ENCODE measurements at regions of chr6 and their contacts with region 1.

Region 1: GRCh38 chr6:85482905-85483700 is 33.2 kb downstream of the NT5E start:
- DNase-seq: peak; percentile 64
- H3K4me3 ChIP-seq: no peak overlapping the region; a peak in 1 of 4 replicates
- H3K27ac ChIP-seq: peak overlapping the region; percentile 67 to 92
- H3K4me1 ChIP-seq: peaks cover 6 to 15% of the 10 kb centered on the region in 2 experiments; a peak in 3 of 4 replicates
- H3K27me3 ChIP-seq: no peaks in the 10 kb centered on the region
- CTCF ChIP-seq: peak; percentile 99
- EP300 ChIP-seq: no peak
- RAD21 ChIP-seq: peak; percentile 79

Region 2: GRCh38 chr6:85344996-85345395 is 138.1 kb before region 1 on chr6:
- CTCF ChIA-PET with region 1: interaction called, 12 read pairs
- POLR2A ChIA-PET with region 1: no interaction called
- DNase-seq: no peak
- H3K4me3 ChIP-seq: no peak overlapping the region
- H3K27ac ChIP-seq: no peak overlapping the region
- H3K4me1 ChIP-seq: no peaks in the 10 kb centered on the region
- H3K27me3 ChIP-seq: no peaks in the 10 kb centered on the region; the same call in 1 of the 2 replicates
- CTCF ChIP-seq: no peak
- EP300 ChIP-seq: no peak
- RAD21 ChIP-seq: no peak

Region 3: GRCh38 chr6:85360794-85361642 is 122.1 kb before region 1 on chr6:
- CTCF ChIA-PET with region 1: interaction called, 62 read pairs
- POLR2A ChIA-PET with region 1: no interaction called
- DNase-seq: no peak
- H3K4me3 ChIP-seq: no peak overlapping the region
- H3K27ac ChIP-seq: peak overlapping the region; percentile 67 to 93; a peak in 3 of 4 replicates
- H3K4me1 ChIP-seq: peaks cover 0 to 34% of the 10 kb centered on the region in 2 experiments
- H3K27me3 ChIP-seq: no peaks in the 10 kb centered on the region
- CTCF ChIP-seq: no peak
- EP300 ChIP-seq: peak in 1 of 2 experiments; percentile 72; a peak in 1 of 4 replicates
- RAD21 ChIP-seq: no peak

Region 4: DNA sequence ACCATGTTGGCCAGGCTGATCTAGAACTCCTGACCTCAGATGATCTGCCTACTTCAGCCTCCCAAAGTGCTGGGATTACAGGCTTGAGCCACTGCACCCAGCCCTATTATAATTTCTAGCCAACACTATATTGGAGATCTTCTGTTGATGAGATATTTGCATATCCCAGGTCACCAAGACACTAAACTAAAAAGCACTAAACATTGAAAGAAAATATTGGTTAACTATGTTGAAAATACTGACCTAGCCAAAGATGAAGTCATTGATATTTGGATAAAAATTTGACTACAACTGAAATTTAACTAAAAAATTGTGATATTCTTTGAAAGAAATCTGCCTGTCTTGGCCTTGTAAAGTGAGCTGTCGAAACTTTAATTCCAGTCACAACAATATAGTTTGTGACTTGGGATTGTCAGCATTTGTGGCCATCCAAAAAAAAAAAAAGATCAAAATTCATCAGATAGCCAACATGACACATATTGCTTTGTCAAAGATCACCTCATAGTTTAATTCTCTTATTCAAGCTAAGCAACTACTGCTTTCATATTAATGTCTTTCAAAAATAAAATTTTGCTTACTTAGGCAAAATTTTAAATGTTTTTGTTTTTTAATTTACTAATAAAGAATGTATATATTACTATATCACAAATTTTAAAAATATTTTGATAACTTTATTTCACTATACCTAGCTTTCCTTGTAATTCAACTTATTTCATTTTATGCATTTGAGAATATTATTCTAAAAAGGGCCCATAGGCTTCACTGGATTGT is 39.6 kb before region 1 on chr6:
- CTCF ChIA-PET with region 1: interaction called, 11 read pairs
- POLR2A ChIA-PET with region 1: no interaction called
- DNase-seq: no peak
- H3K4me3 ChIP-seq: no peak overlapping the region
- H3K27ac ChIP-seq: peak overlapping the region in 1 of 2 experiments; percentile 47; a peak in 1 of 4 replicates
- H3K4me1 ChIP-seq: no peaks in the 10 kb centered on the region
- H3K27me3 ChIP-seq: no peaks in the 10 kb centered on the region
- CTCF ChIP-seq: no peak
- EP300 ChIP-seq: no peak
- RAD21 ChIP-seq: no peak

Region 5: DNA sequence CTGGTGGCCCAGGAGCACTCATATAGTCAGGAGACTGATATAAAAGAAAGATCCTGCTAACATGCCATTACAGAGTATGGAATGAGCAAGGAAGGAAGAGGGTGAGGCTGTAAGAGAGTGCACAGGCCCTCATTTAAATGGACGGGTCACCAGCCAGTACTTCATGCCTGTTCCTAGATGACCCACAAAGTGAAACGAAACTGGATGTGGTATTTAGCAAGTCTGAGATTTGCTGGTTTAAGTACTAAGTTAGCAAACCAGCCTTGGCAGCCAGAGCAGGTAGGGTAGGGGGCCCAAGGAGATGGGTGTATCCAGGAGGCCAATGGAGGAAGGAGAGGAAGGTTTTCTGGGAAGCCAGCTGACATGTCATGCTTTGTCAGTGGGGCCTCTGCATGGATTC is 17.3 kb before region 1 on chr6:
- CTCF ChIA-PET with region 1: interaction called, 28 read pairs
- POLR2A ChIA-PET with region 1: no interaction called
- DNase-seq: no peak
- H3K4me3 ChIP-seq: no peak overlapping the region
- H3K27ac ChIP-seq: peak overlapping the region; percentile 88 to 100
- H3K4me1 ChIP-seq: peaks cover 5 to 81% of the 10 kb centered on the region in 2 experiments
- H3K27me3 ChIP-seq: no peaks in the 10 kb centered on the region
- CTCF ChIP-seq: no peak
- EP300 ChIP-seq: no peak
- RAD21 ChIP-seq: no peak

Region 6: DNA sequence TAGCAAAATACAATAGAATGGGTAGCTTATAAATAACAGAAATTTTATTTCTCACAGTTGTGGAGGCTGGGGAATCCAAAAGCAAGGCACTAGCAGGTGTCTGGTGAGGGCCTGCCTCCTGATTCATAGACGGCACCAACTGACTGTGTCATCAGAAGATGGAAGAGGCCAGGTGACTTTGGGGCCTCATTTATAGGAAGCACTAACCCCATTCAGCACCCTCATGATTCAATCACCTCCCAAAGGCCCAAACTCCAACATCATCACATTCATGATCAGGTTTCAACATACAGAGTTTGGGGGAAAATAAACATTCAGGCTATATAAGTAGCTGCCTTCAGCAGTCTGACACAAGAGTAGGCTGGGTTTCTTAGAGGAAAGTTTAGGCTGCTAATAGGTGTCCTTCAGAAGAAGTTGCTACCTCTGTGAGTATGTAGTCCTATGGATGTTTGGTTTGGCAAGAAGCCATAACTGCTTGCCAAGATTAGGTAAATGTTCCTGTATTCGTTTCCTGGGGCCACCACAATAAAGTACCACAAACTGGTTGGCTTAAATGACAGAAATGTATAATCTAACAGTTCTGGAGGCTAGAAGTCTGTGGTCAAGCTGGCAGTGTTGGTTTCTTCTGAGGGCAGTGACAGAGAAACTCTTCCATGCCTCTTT is 15.6 kb after region 1 on chr6:
- CTCF ChIA-PET with region 1: interaction called, 53 read pairs
- POLR2A ChIA-PET with region 1: no interaction called
- DNase-seq: no peak
- H3K4me3 ChIP-seq: no peak overlapping the region
- H3K27ac ChIP-seq: no peak overlapping the region
- H3K4me1 ChIP-seq: no peaks in the 10 kb centered on the region
- H3K27me3 ChIP-seq: no peaks in the 10 kb centered on the region
- CTCF ChIP-seq: no peak
- EP300 ChIP-seq: no peak
- RAD21 ChIP-seq: no peak

Region 7: DNA sequence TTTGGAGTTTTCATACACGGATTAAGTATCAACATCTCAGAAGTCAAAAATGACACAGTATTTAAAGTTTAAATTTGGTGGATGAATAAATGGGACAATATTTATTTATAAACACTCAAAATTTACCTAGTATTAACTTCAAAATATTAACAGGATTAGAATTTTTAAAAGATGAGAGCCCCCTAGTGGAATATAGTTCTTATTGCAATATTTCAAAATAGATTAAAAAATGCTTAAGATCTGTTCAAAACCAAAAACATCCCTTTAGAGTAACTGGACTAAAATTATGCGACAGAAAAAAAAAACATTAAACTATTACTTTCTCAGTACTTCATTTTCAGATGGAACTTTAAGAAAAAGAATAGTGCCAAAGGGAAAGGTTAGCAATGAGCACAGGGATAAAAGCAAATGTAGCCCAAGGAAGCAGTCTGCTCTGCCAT is 54.0 kb after region 1 on chr6:
- CTCF ChIA-PET with region 1: interaction called, 12 read pairs
- POLR2A ChIA-PET with region 1: no interaction called
- DNase-seq: peak; percentile 14
- H3K4me3 ChIP-seq: no peak overlapping the region; a peak in 1 of 4 replicates
- H3K27ac ChIP-seq: peak overlapping the region in 1 of 2 experiments; percentile 20; a peak in 1 of 4 replicates
- H3K4me1 ChIP-seq: no peaks in the 10 kb centered on the region
- H3K27me3 ChIP-seq: no peaks in the 10 kb centered on the region
- CTCF ChIP-seq: peak; percentile 85
- EP300 ChIP-seq: no peak
- RAD21 ChIP-seq: peak; percentile 18; the same call in 1 of the 2 replicates

Measured in SK-N-SH (cell line).